Calu3 (cell line): ENCODE measurements at regions of chr3 and their contacts with region 1.

Region 1: GRCh38 chr3:151086484-151087456 is 1.3 kb downstream of the MED12L start:
- DNase-seq: peak; percentile 82
- H3K4me3 Mint-ChIP-seq: peak overlapping the region; percentile 97
- H3K27ac Mint-ChIP-seq: peak overlapping the region; percentile 62
- H3K4me1 Mint-ChIP-seq: peaks cover 9% of the 10 kb centered on the region
- H3K27me3 Mint-ChIP-seq: peaks cover 37% of the 10 kb centered on the region
- CTCF ChIP-seq: peak; percentile 29

Region 2: GRCh38 chr3:150925751-150926201 is 161.0 kb before region 1 on chr3:
- CTCF ChIA-PET with region 1: no interaction called
- intact Hi-C with region 1: loop called (anchors 5 kb)
- DNase-seq: peak; percentile 87
- H3K4me3 Mint-ChIP-seq: no peak overlapping the region
- H3K27ac Mint-ChIP-seq: no peak overlapping the region
- H3K4me1 Mint-ChIP-seq: no peaks in the 10 kb centered on the region
- H3K27me3 Mint-ChIP-seq: peaks cover 63% of the 10 kb centered on the region
- CTCF ChIP-seq: peak; percentile 95

Region 3: GRCh38 chr3:151075869-151076562 is 10.8 kb before region 1 on chr3:
- CTCF ChIA-PET with region 1: interaction called, 8 read pairs
- intact Hi-C with region 1: loop called (anchors 1 kb)
- DNase-seq: no peak
- H3K4me3 Mint-ChIP-seq: no peak overlapping the region
- H3K27ac Mint-ChIP-seq: no peak overlapping the region
- H3K4me1 Mint-ChIP-seq: no peaks in the 10 kb centered on the region
- H3K27me3 Mint-ChIP-seq: peaks cover 16% of the 10 kb centered on the region
- CTCF ChIP-seq: no peak